Activated naive CD4-positive, alpha-beta T cell treated with anti-CD3 and anti-CD28 coated beads for 36 hours (primary cell): ENCODE measurements at regions of chr2 and their contacts with region 1.

Region 1: GRCh38 chr2:232550354-232551249 is at the starts of genes EIF4E2 and TIGD1:
- DNase-seq: peak; percentile 95
- H3K4me3 Mint-ChIP-seq: peak within 1 kb of the TSS; percentile 99
- H3K27ac Mint-ChIP-seq: peak within 1 kb of the TSS; percentile 98
- H3K4me1 Mint-ChIP-seq: peaks cover 66% of the 10 kb centered on the region
- H3K27me3 Mint-ChIP-seq: no peaks in the 10 kb centered on the region
- total RNA-seq, gene EIF4E2: 46.6 to 54.1 TPM
- total RNA-seq, gene TIGD1: 7.7 to 8.3 TPM

Region 2: DNA sequence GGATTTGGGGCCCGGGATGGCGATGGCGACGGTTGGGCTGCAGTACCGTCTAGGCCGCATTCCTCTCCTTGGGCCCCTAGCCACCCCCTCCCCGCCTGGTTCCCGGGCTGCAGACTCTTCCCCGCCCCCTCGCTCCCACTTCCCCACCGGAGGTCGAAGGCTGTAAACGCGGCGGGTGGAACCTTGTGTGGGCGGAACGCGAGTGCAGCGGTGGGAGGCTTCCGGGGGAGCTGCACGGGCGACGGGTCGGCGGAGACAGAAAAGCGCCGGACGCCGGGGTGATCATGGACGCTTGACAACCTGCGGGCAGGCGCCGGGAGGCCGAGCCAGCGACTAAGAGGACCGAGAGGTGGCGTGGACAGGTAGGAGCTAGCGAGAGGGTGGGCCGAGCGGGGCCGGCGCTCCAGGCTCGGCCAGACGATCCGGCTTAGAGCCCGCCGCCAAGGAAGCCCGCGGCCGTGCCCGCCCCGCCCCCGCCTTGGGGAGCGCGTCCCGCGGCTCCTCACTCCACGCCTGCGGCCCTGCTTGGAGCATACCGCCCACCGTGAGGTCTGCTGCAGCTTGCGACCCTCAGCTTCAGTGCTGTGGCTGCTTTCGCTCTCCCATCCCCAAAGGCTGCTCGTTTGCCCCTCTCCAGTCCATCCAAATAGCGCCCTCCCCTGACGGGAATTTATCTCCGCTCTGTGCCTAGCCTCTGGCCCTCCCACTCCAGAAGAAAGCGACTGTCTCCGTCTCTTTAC is 764.3 kb before region 1 on chr2 and contains the start of gene COPS7B:
- CTCF ChIA-PET with region 1: no interaction called
- intact Hi-C with region 1: loop called (anchors 1 kb)
- DNase-seq: peak; percentile 88
- H3K4me3 Mint-ChIP-seq: peak within 1 kb of the TSS; percentile 86
- H3K27ac Mint-ChIP-seq: peak within 1 kb of the TSS; percentile 84
- H3K4me1 Mint-ChIP-seq: peaks cover 66% of the 10 kb centered on the region
- H3K27me3 Mint-ChIP-seq: no peaks in the 10 kb centered on the region
- total RNA-seq, gene COPS7B: 47.3 to 52.8 TPM

Region 3: GRCh38 chr2:231961349-231962166 is 589.0 kb before region 1 on chr2 and contains the start of gene DIS3L2:
- CTCF ChIA-PET with region 1: no interaction called
- intact Hi-C with region 1: loop called (anchors 1 kb)
- DNase-seq: peak; percentile 82
- H3K4me3 Mint-ChIP-seq: peak within 1 kb of the TSS; percentile 84
- H3K27ac Mint-ChIP-seq: peak within 1 kb of the TSS; percentile 86
- H3K4me1 Mint-ChIP-seq: peaks cover 31% of the 10 kb centered on the region
- H3K27me3 Mint-ChIP-seq: no peaks in the 10 kb centered on the region
- total RNA-seq, gene DIS3L2: 32.4 to 35.3 TPM

Region 4: GRCh38 chr2:232592772-232593395 is 42.3 kb after region 1 on chr2:
- CTCF ChIA-PET with region 1: no interaction called
- intact Hi-C with region 1: loop called (anchors 5 kb)
- DNase-seq: peak; percentile 24
- H3K4me3 Mint-ChIP-seq: no peak overlapping the region
- H3K27ac Mint-ChIP-seq: peak overlapping the region; percentile 74
- H3K4me1 Mint-ChIP-seq: peaks cover 8% of the 10 kb centered on the region
- H3K27me3 Mint-ChIP-seq: no peaks in the 10 kb centered on the region

Region 5: DNA sequence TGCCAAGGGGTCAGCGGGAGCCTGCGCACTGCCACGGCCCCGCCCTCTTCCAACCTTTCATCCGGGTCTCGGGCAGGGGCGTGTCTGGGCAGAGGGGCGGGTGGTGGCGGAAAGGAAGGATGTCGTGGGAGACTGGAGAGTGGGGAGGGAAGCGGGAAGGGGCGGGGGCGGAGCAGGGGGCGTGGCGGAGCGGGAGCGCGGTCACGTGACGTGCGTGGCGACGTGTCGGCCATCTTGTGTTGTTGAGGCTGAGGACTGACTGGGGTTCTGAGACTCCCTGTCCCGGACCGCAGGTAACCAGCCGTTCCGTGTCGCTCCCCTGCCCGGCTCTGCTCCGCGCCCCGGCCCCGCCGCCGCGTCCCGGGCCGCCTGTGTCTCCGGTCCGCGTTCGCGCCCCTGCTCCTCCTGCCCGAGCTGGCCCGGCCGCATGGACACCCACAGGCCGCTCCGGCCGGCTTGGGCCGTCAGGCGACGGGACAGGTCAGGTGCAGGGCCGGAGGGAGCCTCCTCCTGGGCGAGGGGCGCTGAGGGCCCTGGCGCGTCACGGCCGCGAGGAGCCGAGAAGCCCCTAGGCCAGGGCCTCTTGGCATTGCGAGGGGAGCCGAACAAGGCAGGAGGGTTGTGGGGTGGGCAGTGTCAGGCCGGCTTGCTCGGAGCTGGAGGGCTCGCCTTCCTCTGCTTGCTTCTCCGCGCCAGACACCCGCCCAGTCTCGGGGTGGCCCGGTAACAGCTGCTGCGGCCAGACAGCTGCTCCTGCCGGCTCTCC is 146.7 kb after region 1 on chr2 and contains the start of gene GIGYF2:
- CTCF ChIA-PET with region 1: no interaction called
- intact Hi-C with region 1: loop called (anchors 2 kb)
- DNase-seq: peak; percentile 97
- H3K4me3 Mint-ChIP-seq: peak within 1 kb of the TSS; percentile 87
- H3K27ac Mint-ChIP-seq: peak within 1 kb of the TSS; percentile 70
- H3K4me1 Mint-ChIP-seq: peaks cover 36% of the 10 kb centered on the region
- H3K27me3 Mint-ChIP-seq: no peaks in the 10 kb centered on the region
- total RNA-seq, gene GIGYF2: 49.7 to 52.8 TPM

Region 6: DNA sequence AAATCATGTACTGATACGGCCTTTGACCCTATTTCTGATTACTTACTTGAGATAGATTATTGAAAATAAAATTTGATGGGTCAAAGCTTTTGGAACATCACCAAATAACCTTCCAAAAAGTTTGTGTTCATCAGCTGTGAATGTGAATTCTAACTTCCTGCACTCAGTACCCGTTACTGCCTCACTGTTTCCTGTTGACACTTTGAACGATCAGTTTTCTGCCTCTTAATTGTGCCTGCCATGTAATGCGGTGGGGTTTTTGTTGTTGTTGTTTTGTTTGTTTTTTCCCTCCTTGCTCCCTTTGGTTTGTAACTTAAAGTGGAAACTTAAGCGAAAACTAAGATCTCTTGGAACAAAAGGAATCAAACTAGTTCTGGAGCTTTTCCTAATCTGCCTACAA is 719.8 kb after region 1 on chr2:
- CTCF ChIA-PET with region 1: no interaction called
- intact Hi-C with region 1: no loop called
- DNase-seq: peak; percentile 27
- H3K4me3 Mint-ChIP-seq: peak overlapping the region; percentile 30
- H3K27ac Mint-ChIP-seq: peak overlapping the region; percentile 95
- H3K4me1 Mint-ChIP-seq: peaks cover 60% of the 10 kb centered on the region
- H3K27me3 Mint-ChIP-seq: no peaks in the 10 kb centered on the region